Heart right ventricle (tissue), 16 donors: ENCODE measurements at regions of chr4 and their contacts with region 1.

Region 1: DNA sequence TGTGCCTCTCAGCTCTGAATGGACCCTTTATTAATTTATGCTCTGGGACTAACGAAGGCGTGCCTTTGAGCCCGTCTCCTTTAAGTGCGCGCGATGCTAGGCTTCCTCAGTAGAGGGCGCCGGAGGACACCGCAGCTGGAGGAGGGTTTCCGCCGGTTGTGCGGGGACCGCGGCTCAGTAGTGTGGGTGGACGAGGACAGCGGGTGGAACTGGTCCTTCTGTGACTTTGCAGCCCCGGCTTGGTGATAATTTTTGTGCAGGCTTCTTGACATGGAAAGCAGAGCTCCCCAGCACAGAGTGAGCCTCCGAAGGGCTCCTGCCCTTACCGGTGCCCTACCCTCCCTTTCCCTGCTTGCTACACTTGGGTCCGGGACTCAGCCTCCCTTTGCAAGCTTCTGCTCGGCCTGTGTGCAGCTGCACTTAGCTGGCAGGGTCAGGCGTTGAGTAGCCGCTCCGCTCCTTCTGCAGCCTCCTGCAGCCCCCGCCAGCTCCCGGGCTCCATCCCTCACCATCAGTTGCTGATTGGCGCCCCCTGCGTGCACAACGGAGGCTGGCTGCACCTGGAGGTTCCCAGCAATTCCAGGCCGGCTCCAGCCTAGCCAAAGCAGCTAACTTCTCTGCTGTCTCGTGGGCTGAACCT is 26.8 kb upstream of the BOD1L1 start:
- DNase-seq: peak; percentile 74 to 81
- ATAC-seq: peak; percentile 91 to 96 (median 93)
- H3K4me3 ChIP-seq: peak overlapping the region in 9 of 10 donors; percentile 14 to 60 (median 56)
- H3K27ac ChIP-seq: peak overlapping the region in 1 of 10 donors; percentile 17
- H3K4me1 ChIP-seq: peaks cover 0 to 15% (median 7%) of the 10 kb centered on the region in 9 donors
- H3K27me3 ChIP-seq: peaks cover 0 to 4% (median 0%) of the 10 kb centered on the region in 7 donors
- CTCF ChIP-seq: peak; percentile 53 to 87 (median 81)

Region 2: DNA sequence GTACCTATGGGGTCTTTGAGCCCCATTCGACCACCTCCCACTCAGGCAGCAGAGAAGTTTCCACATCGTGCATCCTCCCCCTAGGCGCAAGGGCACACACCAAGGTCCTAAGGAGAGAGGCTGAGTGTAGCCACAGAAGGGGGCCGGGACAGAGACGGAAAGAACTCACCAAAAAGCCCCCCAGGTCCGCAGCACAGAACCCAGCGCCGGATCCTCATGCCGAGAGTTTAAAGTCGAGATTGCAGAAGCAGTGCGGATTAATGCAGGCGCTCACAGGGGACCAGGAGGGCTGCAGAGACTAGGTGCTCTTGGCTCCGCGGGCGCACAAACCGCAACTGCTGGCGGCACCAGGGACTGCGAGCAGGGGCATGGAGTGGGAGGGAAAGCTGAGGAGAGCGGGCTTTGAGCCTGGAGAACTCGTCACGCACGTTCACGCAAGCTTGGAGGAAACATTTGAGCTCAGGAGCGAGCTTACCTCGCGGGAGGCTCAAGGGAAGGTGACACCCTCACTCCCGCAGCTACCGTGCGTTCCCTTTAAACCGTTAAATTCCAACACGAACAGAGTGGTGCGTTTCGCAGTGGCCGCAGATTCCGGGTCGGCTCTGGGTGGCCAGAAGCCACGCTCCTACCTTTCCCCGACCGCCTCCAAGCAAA is 118.4 kb before region 1 on chr4:
- intact Hi-C with region 1: no loop called
- DNase-seq: no peak
- ATAC-seq: no peak
- H3K4me3 ChIP-seq: no peak overlapping the region
- H3K27ac ChIP-seq: no peak overlapping the region
- H3K4me1 ChIP-seq: peaks cover 2 to 40% (median 20%) of the 10 kb centered on the region in 9 donors
- H3K27me3 ChIP-seq: peaks cover 58 to 100% (median 100%) of the 10 kb centered on the region in 7 donors
- CTCF ChIP-seq: no peak

Region 3: GRCh38 chr4:13559413-13559812 is 94.9 kb before region 1 on chr4:
- intact Hi-C with region 1: no loop called
- DNase-seq: no peak
- ATAC-seq: no peak
- H3K4me3 ChIP-seq: no peak overlapping the region
- H3K27ac ChIP-seq: no peak overlapping the region
- H3K4me1 ChIP-seq: no peaks in the 10 kb centered on the region
- H3K27me3 ChIP-seq: peaks cover 0 to 15% (median 6%) of the 10 kb centered on the region in 7 donors
- CTCF ChIP-seq: no peak

Region 4: GRCh38 chr4:13830449-13830848 is 176.2 kb after region 1 on chr4:
- intact Hi-C with region 1: loop called in 3 of 10 experiments (anchors 10 kb)
- DNase-seq: no peak
- ATAC-seq: no peak
- H3K4me3 ChIP-seq: no peak overlapping the region
- H3K27ac ChIP-seq: no peak overlapping the region
- H3K4me1 ChIP-seq: peaks cover 0 to 21% (median 10%) of the 10 kb centered on the region in 9 donors
- H3K27me3 ChIP-seq: no peaks in the 10 kb centered on the region
- CTCF ChIP-seq: no peak

Region 5: DNA sequence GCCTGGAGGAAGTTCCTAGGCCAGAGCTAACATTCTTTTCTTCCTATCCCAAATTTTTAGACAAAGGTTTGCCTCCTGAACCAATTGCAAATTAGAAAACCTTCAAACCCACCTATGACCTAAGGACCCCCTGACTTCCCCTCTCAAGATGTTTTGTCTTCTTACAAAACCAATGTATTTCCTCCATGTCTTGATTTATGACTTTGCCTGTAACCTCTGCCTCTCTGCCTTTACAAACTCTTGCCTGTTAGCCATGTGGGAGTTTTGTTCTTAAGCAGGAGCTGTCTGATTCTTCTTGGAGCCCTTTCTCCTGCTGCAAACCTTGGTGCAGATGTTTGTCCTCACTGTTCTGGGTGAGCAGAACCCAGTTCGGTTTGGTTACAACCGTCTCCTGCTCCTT is 195.5 kb after region 1 on chr4:
- intact Hi-C with region 1: loop called in 2 of 10 experiments (anchors 10 kb)
- DNase-seq: no peak
- ATAC-seq: no peak
- H3K4me3 ChIP-seq: no peak overlapping the region
- H3K27ac ChIP-seq: no peak overlapping the region
- H3K4me1 ChIP-seq: peaks cover 0 to 5% (median 0%) of the 10 kb centered on the region in 9 donors
- H3K27me3 ChIP-seq: no peaks in the 10 kb centered on the region
- CTCF ChIP-seq: no peak

Region 6: GRCh38 chr4:13860126-13860525 is 205.8 kb after region 1 on chr4:
- intact Hi-C with region 1: loop called in 8 of 10 experiments (anchors 2 to 10 kb)
- DNase-seq: no peak
- ATAC-seq: peak in 2 of 8 donors; percentile 30 to 42
- H3K4me3 ChIP-seq: no peak overlapping the region
- H3K27ac ChIP-seq: no peak overlapping the region
- H3K4me1 ChIP-seq: peaks cover 0 to 4% (median 0%) of the 10 kb centered on the region in 9 donors
- H3K27me3 ChIP-seq: no peaks in the 10 kb centered on the region
- CTCF ChIP-seq: peak in 4 of 9 donors; percentile 32 to 42 (median 38)

Region 7: DNA sequence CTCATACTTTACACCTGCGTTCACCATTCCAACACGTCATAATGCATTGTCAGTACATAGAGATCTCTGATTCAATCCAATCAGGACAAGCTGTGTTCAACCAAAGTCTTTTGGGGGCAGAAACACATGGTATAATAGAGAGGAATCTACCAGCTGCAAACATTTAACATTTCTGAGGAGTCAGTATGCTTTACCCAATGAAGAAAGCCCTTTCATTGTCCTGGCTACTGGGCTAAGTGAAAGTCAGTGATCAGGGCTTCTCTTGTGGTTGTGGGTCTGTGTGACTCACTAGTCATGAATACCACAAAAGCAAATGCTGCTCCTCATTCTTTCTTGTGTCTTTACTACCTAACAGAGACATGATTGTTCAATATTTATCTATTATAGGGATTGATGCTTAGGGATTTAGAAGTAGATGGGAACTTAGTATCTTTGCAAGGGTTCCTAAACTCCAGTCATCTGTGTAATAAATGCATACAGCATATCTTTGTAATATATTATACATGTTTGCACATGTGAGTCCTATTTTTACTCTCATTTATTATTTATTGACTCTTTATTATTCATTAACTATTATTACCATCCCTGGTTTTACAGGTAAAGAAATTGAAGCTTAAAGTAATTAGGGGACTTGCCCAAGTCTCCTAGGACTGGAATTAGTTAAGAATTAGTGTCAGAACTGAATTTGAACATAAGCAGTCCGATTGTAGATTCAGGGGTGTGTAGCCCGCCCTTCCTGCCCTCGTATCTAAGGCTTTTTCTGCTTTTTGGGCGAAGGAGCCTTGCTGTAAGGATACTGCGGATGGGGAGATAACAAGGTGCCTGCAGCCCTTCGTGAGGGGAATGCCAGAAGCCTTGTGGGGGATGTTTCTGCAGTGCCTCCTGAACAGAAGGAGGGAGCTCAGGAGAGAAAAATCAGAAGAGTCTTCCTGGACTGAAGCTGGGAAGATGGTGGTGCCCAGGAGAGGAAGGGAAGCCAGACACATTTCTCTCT is 326.3 kb after region 1 on chr4:
- intact Hi-C with region 1: loop called in 1 of 10 experiments (anchors 5 kb)
- DNase-seq: no peak
- ATAC-seq: no peak
- H3K4me3 ChIP-seq: no peak overlapping the region
- H3K27ac ChIP-seq: no peak overlapping the region
- H3K4me1 ChIP-seq: peaks cover 0 to 9% (median 4%) of the 10 kb centered on the region in 9 donors
- H3K27me3 ChIP-seq: no peaks in the 10 kb centered on the region
- CTCF ChIP-seq: no peak

Region 8: DNA sequence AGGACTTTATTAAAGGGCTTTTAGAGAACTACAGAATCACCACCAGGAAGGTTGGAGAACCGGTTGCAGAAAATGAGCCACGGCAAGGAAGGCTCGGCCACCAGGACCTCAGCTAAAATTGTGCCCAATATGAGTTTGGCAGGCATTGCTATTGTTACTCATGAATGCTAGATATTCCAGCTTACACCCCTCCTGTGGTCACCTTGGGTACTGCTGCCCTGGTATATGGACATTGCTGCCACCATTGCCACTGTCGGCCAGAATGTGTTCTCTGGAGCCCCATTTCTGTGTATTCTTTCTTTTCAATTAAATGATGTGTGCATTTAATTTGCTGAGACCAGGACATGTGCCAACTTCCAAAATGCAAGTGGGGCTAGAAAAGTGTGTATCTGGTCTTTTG is 600.0 kb after region 1 on chr4:
- intact Hi-C with region 1: loop called in 2 of 10 experiments (anchors 10 kb)
- DNase-seq: peak; percentile 4 to 6
- ATAC-seq: peak in 1 of 8 donors; percentile 20
- H3K4me3 ChIP-seq: no peak overlapping the region
- H3K27ac ChIP-seq: no peak overlapping the region
- H3K4me1 ChIP-seq: no peaks in the 10 kb centered on the region
- H3K27me3 ChIP-seq: no peaks in the 10 kb centered on the region
- CTCF ChIP-seq: peak; percentile 16 to 58 (median 50)